Activated CD8-positive, alpha-beta memory T cell treated with anti-CD3 and anti-CD28 coated beads, Interleukin-2, amount 10 ng/mL, durations not matched to agents 7 days and 5 days (primary cell): ENCODE measurements at regions of chr22 and their contacts with region 1.

Region 1: DNA sequence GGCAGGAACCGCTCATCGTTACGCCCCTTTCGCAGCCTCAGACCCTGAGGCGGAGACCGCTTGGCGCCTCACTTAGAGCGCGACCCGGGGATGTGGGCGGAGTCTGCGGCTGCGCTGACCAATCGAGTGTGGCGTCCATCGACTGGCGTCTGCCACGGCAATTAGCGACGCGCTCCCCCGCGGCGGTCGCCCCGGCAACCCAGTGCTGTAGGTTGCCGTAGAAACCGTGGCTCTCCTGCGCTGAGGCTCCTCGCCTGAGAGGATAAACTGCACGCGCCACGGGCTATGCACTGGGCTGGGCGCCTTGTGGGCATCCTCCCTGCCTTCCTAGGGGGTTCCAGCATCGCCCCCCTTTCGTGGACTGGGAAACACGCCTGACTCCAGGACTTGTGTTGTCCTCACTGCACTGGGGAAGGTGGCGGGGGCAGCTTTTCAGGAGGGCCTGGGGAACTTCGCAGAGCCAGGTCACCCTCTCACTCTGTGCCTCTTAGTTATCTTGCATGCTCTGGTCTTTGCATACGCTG is 701 bp upstream of the P2RX6 start:
- DNase-seq: peak; percentile 94
- ATAC-seq: peak; percentile 94
- H3K4me3 Mint-ChIP-seq: peak overlapping the region; percentile 72
- H3K27ac Mint-ChIP-seq: peak overlapping the region; percentile 35
- H3K4me1 Mint-ChIP-seq: peaks cover 16% of the 10 kb centered on the region
- H3K27me3 Mint-ChIP-seq: peaks cover 2% of the 10 kb centered on the region

Region 2: DNA sequence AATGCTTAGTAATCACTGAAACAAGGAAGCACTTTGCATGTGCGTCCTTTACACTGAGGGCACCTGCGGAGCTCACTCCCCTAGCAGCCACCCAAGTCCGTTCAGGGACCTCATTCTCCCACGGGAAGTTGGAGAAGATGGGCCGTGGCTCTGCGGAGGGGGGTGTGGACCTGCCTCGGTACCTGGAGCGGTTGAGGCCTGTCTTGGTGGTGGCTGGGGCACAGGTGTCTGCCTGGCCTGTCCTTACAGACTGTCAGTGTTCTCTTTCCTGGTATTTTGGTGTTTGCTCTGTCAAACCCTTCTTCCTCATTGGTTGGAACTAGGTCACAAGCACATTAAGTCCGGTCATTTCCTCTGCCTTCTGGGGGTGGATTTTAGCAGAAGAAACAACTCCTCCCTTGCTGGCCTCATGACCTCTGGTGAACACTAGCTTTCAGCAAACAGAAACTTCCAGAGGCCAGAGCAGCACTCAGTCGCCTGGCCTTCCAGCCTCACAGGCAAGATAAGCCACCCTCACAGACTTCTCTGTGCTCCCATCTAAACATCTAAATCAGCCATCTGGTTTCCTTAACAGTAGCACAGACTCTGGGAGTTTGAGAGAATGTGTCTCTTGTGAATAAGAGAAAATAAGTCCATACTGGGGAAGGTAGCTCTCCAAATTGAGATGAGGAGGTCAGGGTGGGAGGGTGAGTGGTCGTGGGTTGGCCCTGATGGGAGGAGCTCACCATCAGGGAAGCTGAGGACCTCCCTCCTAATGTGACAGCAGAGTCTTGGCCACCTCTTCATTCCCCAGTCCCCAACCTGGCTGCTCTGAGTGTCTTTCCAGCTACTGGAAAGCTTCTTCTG is 146.9 kb before region 1 on chr22:
- CTCF ChIA-PET with region 1: no interaction called
- DNase-seq: peak; percentile 44
- ATAC-seq: peak; percentile 70
- H3K4me3 Mint-ChIP-seq: no peak overlapping the region
- H3K27ac Mint-ChIP-seq: peak overlapping the region; percentile 59
- H3K4me1 Mint-ChIP-seq: peaks cover 19% of the 10 kb centered on the region
- H3K27me3 Mint-ChIP-seq: no peaks in the 10 kb centered on the region

Region 3: DNA sequence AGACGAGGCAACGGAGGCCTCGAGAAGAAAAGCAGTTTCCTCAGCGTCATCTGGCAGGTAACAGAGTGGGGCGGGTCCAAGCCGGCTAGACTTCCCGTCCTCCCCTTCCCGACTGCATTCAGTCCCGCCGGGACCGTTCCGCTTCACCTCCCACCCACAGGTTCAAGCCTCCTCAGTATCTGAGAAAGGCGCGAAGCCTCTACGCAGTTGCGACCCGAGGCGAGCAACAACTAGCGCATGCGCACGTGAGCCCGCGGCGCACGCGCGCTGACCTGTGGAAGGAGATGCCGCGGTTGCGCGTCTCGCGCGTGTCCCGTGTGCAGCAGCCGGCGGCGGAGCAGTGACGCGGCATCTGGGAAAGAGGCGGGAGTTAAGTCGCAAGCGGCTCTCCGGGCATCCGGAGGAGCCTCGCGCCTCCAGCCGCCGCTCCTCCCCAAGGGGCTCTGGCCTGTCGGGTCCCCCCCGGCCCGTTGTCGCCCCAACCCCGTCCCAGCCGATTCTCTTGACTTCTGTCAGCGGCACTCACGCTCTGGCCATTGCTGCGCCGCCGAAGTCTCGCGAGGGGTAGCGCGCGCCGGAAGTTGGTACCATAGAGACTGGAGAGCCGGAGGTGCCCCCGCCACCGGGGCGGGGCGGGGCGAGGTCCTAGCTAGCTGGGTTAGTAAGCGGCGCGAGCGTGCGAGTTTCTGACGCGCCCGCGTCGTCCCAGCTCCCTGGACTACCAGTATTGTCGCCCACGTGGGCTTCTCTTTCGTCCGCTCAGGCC is 12.5 kb before region 1 on chr22 and contains the start of gene THAP7:
- CTCF ChIA-PET with region 1: interaction called, 22 read pairs
- DNase-seq: peak; percentile 98
- ATAC-seq: peak; percentile 94
- H3K4me3 Mint-ChIP-seq: peak within 1 kb of the TSS; percentile 96
- H3K27ac Mint-ChIP-seq: peak within 1 kb of the TSS; percentile 97
- H3K4me1 Mint-ChIP-seq: peaks cover 28% of the 10 kb centered on the region
- H3K27me3 Mint-ChIP-seq: no peaks in the 10 kb centered on the region
- total RNA-seq, gene THAP7: 25.9 to 28.7 TPM

Region 4: DNA sequence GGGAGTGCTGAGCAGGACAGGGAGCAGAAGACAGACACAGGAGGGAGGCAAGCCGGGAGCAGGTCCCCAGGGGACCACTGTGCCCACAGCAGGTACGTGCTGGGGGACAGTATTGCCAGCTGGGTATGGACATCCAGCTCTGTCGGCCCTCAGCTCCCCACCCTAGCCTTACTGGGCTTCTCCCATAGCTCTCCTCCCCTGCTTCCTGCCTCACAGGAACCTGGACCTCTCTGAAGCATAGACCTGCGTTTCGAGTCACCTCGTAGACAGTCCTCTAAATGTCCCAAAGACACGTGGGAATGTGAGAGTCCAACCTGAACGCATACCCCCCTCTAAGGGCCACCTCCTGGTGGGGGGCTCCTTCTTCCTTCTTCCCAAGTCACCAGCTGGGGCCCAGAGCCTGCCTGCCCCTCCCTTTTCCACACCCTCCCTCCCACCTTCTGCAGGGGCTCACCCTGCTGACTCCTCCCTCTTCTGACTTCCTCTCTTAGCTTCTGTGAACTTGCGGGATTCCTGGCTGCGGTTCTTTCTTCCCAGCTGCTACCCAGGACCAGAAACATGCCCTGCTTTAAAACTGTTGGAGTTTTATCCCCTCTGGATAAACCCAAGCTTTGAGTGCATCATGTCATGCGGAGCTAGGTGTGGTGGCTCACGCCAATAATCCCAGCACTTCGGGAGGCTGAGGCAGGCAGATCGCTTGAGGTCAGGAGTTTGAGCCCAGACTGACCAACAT is 41.5 kb after region 1 on chr22:
- CTCF ChIA-PET with region 1: no interaction called
- DNase-seq: no peak
- ATAC-seq: peak; percentile 27
- H3K4me3 Mint-ChIP-seq: no peak overlapping the region
- H3K27ac Mint-ChIP-seq: no peak overlapping the region
- H3K4me1 Mint-ChIP-seq: peaks cover 10% of the 10 kb centered on the region
- H3K27me3 Mint-ChIP-seq: peaks cover 8% of the 10 kb centered on the region

Region 5: DNA sequence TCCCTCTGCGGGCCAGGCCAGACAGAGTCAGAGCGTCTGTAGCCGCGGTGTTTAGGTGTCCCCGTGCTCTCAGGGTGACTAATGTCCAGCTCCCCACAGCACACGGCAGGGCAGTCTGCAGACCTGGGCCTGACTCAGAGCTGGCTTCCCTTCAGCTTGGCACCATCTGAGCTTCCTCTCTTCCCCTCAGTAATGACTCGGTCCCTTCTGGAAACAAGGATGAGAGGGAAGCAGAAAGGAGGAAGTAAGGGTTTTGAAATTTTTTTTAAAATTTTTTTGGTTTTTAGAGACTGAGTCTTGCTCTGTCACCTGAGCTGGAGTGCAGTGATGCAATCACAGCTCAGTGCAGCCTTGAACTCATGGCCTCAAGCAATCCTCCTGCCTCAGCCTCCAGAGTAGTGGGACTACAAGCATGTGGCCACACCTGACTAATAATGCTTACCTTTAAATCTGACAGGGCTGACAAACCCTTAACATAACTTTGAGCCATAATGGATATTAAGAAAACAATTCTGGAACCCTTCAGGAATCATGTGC is 60.0 kb after region 1 on chr22:
- CTCF ChIA-PET with region 1: no interaction called
- DNase-seq: no peak
- ATAC-seq: no peak
- H3K4me3 Mint-ChIP-seq: no peak overlapping the region
- H3K27ac Mint-ChIP-seq: no peak overlapping the region
- H3K4me1 Mint-ChIP-seq: no peaks in the 10 kb centered on the region
- H3K27me3 Mint-ChIP-seq: no peaks in the 10 kb centered on the region